ENCODE measurements at regions of chr16 and their contacts with region 1.

Region 1: DNA sequence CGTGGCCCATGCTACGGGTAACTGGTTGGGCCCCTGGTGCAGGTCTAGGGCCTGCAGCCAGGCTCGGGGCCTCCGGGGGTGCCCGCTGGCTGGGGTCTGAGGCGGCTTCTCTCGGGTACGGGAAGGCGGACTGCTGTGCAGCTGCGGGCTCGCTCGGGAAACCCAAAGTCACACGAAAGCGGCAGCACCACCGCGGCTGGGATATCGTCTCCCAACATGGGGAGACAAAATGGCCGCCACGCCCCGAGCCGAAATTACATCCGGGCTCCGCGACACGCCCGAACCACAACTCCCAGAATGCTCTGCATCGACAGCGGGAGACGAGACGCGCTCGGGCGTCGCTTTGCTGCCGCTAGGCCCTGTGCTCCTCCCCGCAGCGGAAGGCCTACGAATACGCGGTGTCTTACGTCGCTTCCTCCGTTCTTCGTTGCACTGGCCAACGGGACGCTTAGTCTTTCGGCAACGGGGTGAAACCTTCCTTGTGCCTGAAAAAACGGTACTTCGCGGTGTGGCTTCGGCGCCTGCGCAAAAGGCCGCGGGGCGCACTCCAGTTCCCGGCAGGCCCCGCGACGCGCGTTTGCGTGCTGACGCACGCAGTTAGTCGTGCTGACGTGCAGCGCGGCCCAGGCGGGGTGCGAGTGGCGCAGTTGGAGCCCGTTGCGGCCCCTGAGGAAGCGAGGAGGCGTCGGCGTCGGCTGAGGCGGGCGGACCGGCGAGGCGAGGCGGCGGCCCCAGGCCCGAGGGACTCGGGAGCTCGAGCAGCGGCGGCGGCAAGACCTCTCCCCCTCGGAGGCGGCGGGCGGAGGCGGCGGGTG is at the start of gene SRRM2:
- DNase-seq: peak; percentile 93 to 95
- H3K4me3 ChIP-seq: peak within 1 kb of the TSS; percentile 75
- H3K4me3 Mint-ChIP-seq: peak within 1 kb of the TSS; percentile 78
- H3K27ac Mint-ChIP-seq: peak within 1 kb of the TSS; percentile 97
- H3K4me1 ChIP-seq: peaks cover 8% of the 10 kb centered on the region; the same call in 1 of the 2 replicates
- H3K4me1 Mint-ChIP-seq: peaks cover 31% of the 10 kb centered on the region
- H3K27me3 ChIP-seq: no peaks in the 10 kb centered on the region
- H3K27me3 Mint-ChIP-seq: no peaks in the 10 kb centered on the region
- CTCF ChIP-seq: no peak
- total RNA-seq, gene SRRM2: 332 and 382 TPM in 2 replicates

Region 2: GRCh38 chr16:2537453-2538379 is 214.5 kb before region 1 on chr16 and contains the start of gene PDPK1:
- CTCF ChIA-PET with region 1: no interaction called
- POLR2A ChIA-PET with region 1: no interaction called
- intact Hi-C with region 1: no loop called
- DNase-seq: peak; percentile 93 to 95
- H3K4me3 ChIP-seq: peak within 1 kb of the TSS; percentile 78
- H3K4me3 Mint-ChIP-seq: peak within 1 kb of the TSS; percentile 81
- H3K27ac Mint-ChIP-seq: peak within 1 kb of the TSS; percentile 74
- H3K4me1 ChIP-seq: peaks cover 25% of the 10 kb centered on the region
- H3K4me1 Mint-ChIP-seq: peaks cover 16% of the 10 kb centered on the region
- H3K27me3 ChIP-seq: no peaks in the 10 kb centered on the region
- H3K27me3 Mint-ChIP-seq: no peaks in the 10 kb centered on the region
- CTCF ChIP-seq: no peak
- total RNA-seq, gene PDPK1: 60.5 and 69.8 TPM in 2 replicates

Region 3: GRCh38 chr16:2682209-2683021 is 69.8 kb before region 1 on chr16 and contains the start of gene KCTD5:
- CTCF ChIA-PET with region 1: no interaction called
- POLR2A ChIA-PET with region 1: interaction called, 13 read pairs
- intact Hi-C with region 1: no loop called
- DNase-seq: peak; percentile 94 to 95
- H3K4me3 ChIP-seq: peak within 1 kb of the TSS; percentile 93
- H3K4me3 Mint-ChIP-seq: peak within 1 kb of the TSS; percentile 91
- H3K27ac Mint-ChIP-seq: peak within 1 kb of the TSS; percentile 88
- H3K4me1 ChIP-seq: no peaks in the 10 kb centered on the region; the same call in 1 of the 2 replicates
- H3K4me1 Mint-ChIP-seq: no peaks in the 10 kb centered on the region
- H3K27me3 ChIP-seq: no peaks in the 10 kb centered on the region
- H3K27me3 Mint-ChIP-seq: no peaks in the 10 kb centered on the region
- CTCF ChIP-seq: no peak
- total RNA-seq, gene KCTD5: 30.4 and 33.3 TPM in 2 replicates

Region 4: GRCh38 chr16:2692948-2693651 is 59.1 kb before region 1 on chr16:
- CTCF ChIA-PET with region 1: no interaction called
- POLR2A ChIA-PET with region 1: no interaction called
- intact Hi-C with region 1: no loop called
- DNase-seq: no peak
- H3K4me3 ChIP-seq: no peak overlapping the region
- H3K4me3 Mint-ChIP-seq: no peak overlapping the region
- H3K27ac Mint-ChIP-seq: peak overlapping the region; percentile 59
- H3K4me1 ChIP-seq: no peaks in the 10 kb centered on the region
- H3K4me1 Mint-ChIP-seq: no peaks in the 10 kb centered on the region
- H3K27me3 ChIP-seq: no peaks in the 10 kb centered on the region
- H3K27me3 Mint-ChIP-seq: no peaks in the 10 kb centered on the region
- CTCF ChIP-seq: no peak

Region 5: DNA sequence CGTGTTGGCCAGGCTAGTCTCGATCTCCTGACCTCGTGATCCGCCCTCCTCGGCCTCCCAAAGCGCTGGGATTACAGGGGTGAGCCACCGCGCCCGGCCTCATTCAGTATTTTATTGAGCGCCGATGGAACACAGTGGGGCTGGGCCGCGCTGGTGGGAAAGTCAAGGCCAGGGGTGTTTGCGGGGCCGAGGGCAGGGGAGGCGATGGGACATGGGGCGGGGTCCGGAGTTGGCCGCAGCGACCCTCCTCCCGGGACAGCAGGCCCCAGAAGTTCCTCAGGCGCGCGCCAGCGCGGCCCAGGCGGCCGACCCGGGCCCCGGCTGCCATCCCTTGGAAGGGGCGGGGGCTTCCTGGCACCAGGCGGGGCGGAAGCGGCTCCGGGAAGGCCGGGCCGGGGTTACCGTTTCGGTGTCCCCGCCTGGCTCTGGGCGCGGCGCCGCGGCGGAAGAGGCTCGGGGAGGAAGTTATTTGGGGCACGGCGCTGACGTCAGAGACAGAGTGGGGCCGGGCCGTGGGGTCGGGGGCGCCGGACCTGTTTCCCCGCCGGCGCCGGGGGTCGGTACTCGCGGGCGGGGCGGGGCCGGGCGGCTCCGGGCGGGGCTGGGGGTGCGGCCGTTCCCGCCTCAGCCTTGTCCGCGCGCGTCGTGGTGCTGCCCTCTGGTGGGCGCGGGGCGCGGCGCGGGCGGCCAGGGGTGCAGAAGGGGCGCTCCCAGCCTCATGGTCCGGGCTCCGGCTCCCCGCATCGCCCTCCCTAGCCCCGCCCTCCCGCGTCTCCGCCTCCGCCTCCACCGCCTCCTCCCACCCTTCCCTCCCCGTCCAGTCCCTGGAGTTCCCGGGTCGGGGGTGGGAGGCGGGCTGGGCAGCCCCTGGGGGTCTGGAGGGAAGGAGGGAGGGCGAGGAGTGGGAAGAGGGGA is 31.3 kb before region 1 on chr16:
- CTCF ChIA-PET with region 1: no interaction called
- POLR2A ChIA-PET with region 1: interaction called, 3 read pairs
- intact Hi-C with region 1: loop called (anchors 1 kb)
- DNase-seq: peak; percentile 88 to 90
- H3K4me3 ChIP-seq: peak overlapping the region; percentile 69
- H3K4me3 Mint-ChIP-seq: peak overlapping the region; percentile 70
- H3K27ac Mint-ChIP-seq: no peak overlapping the region
- H3K4me1 ChIP-seq: peaks cover 25% of the 10 kb centered on the region
- H3K4me1 Mint-ChIP-seq: no peaks in the 10 kb centered on the region
- H3K27me3 ChIP-seq: no peaks in the 10 kb centered on the region
- H3K27me3 Mint-ChIP-seq: peaks cover 3% of the 10 kb centered on the region
- CTCF ChIP-seq: peak; percentile 40 to 69

Region 6: DNA sequence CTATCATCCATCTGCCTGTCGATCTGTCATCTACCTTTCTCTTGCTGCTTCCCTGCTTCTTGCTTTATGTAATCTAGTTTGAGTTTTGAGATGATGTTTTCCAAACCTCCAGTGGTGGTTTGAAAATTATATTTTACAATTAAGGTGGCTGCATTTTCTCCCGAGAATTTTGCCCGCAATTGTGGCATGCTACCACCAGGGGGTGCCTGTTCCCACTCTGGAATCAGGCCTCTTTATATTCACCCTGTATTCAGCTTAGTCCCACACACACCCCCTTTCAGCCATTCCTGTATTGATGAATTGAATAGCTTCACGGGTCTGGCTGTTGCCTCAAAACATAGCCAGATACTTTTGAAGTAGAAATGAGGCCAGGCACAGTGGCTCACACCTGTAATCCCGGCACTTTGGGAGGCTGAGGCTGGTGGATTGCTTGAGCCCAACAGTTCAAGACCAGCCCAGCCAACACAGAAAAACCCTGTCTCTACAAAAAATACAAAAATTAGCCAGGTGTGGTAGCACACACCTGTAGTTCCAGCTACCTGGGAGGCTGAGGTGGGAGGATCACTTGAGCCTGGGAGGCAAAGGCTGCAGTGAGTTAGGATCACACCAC is 102.6 kb after region 1 on chr16:
- CTCF ChIA-PET with region 1: no interaction called
- POLR2A ChIA-PET with region 1: no interaction called
- intact Hi-C with region 1: loop called (anchors 5 kb)
- DNase-seq: no peak
- H3K4me3 ChIP-seq: no peak overlapping the region
- H3K4me3 Mint-ChIP-seq: peak overlapping the region; percentile 20
- H3K27ac Mint-ChIP-seq: peak overlapping the region; percentile 87
- H3K4me1 ChIP-seq: peaks cover 10% of the 10 kb centered on the region; the same call in 1 of the 2 replicates
- H3K4me1 Mint-ChIP-seq: peaks cover 15% of the 10 kb centered on the region
- H3K27me3 ChIP-seq: no peaks in the 10 kb centered on the region
- H3K27me3 Mint-ChIP-seq: no peaks in the 10 kb centered on the region
- CTCF ChIP-seq: peak; percentile 69 to 82

Measured in Caco-2 (cell line).